Naive thymus-derived CD4-positive, alpha-beta T cell (primary cell): ENCODE measurements at regions of chr6 and their contacts with region 1.

Region 1: GRCh38 chr6:85298553-85298952 is 151.3 kb upstream of the NT5E start:
- DNase-seq: no peak
- ATAC-seq: no peak
- H3K4me3 ChIP-seq: no peak overlapping the region
- H3K4me3 Mint-ChIP-seq: no peak overlapping the region
- H3K27ac ChIP-seq: no peak overlapping the region
- H3K27ac Mint-ChIP-seq: no peak overlapping the region
- H3K4me1 ChIP-seq: no peaks in the 10 kb centered on the region
- H3K4me1 Mint-ChIP-seq: no peaks in the 10 kb centered on the region
- H3K27me3 ChIP-seq: no peaks in the 10 kb centered on the region
- H3K27me3 Mint-ChIP-seq: peaks cover 0 to 18% (median 3%) of the 10 kb centered on the region in 5 donors

Region 2: DNA sequence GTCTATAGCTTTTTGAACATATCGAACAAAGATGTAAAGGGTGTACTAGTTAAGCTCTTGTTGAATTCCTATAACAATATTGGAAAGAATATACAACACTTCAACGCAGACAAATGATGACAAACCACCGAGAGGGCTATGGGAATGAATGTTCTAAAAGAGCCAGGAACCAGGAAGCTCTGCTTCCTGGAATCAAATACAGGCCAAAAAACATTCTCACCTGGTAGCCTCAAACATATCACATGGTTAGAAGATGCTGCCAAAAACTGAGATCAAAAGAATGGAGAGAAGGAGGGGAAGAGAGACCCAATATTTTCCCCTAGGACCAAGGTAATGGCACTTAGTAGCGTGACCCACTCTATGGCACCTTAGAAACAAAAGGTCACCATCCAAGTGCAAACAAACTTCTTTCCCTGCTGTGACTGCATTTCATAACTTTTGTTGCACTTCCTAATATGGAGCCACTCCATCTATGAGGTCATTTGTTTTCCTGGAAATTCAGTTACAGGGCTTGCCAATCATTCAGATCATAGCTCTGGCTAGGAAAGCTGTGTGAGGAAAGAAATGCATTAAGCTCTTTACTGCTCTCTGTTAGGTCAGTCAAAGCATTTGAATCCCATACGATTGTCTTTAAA is 47.9 kb before region 1 on chr6:
- CTCF ChIA-PET with region 1: no interaction called
- POLR2A ChIA-PET with region 1: no interaction called
- intact Hi-C with region 1: loop called in 1 of 2 experiments (anchors 1 kb)
- DNase-seq: no peak
- ATAC-seq: no peak
- H3K4me3 ChIP-seq: no peak overlapping the region
- H3K4me3 Mint-ChIP-seq: no peak overlapping the region
- H3K27ac ChIP-seq: no peak overlapping the region
- H3K27ac Mint-ChIP-seq: no peak overlapping the region
- H3K4me1 ChIP-seq: no peaks in the 10 kb centered on the region
- H3K4me1 Mint-ChIP-seq: no peaks in the 10 kb centered on the region
- H3K27me3 ChIP-seq: no peaks in the 10 kb centered on the region
- H3K27me3 Mint-ChIP-seq: peaks cover 0 to 8% (median 7%) of the 10 kb centered on the region in 5 donors

Region 3: GRCh38 chr6:85551264-85551663 is 252.7 kb after region 1 on chr6:
- CTCF ChIA-PET with region 1: no interaction called
- POLR2A ChIA-PET with region 1: no interaction called
- intact Hi-C with region 1: no loop called
- DNase-seq: peak in 1 of 9 donors; percentile 12
- ATAC-seq: no peak
- H3K4me3 ChIP-seq: no peak overlapping the region
- H3K4me3 Mint-ChIP-seq: no peak overlapping the region
- H3K27ac ChIP-seq: no peak overlapping the region
- H3K27ac Mint-ChIP-seq: no peak overlapping the region
- H3K4me1 ChIP-seq: no peaks in the 10 kb centered on the region
- H3K4me1 Mint-ChIP-seq: peaks cover 0 to 3% (median 0%) of the 10 kb centered on the region in 7 donors
- H3K27me3 ChIP-seq: no peaks in the 10 kb centered on the region
- H3K27me3 Mint-ChIP-seq: no peaks in the 10 kb centered on the region